ENCODE measurements at regions of chr9 and their contacts with region 1.

Region 1: DNA sequence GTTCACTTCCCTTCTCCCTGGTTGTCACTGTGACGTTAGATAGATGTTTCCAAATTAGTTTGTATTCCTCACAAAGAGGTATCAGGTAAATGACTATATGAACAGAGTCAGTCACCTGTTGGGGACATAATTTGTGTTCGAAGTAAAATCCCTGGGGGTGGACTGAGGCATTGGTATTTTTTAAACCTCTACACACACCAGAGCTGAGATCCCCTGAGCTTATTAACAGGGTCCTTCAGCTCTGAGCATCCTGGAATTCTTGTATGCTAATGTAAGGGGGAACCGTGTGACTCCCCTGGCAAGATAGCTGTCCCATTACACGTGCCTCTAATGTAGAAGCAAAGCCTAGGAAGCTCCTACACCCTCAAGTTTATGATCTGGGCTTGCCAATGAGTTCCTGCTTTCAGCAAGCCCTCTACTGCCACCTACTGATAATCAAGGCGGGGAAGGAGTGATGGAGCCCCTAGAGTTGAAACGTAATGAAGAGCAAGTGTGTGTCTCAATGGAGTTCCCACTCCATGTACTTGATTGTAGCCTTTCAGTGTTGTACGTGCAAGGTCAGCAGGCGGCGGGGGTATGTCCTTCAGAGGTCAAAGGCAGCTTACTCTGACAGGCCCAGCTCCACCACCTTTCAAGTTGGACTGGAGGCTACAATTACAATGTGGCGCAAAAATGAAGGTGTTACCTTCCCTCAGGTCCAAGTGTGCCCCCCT is 14.4 kb downstream of the PRKACG start:
- DNase-seq: peak; percentile 74
- H3K4me3 ChIP-seq: no peak overlapping the region
- H3K27ac ChIP-seq: no peak overlapping the region
- H3K4me1 ChIP-seq: peaks cover 0 to 45% (median 13%) of the 10 kb centered on the region in 6 donors
- H3K27me3 ChIP-seq: no peaks in the 10 kb centered on the region
- CTCF ChIP-seq: peak; percentile 64 to 86 (median 77)
- POLR2A ChIP-seq: no peak

Region 2: DNA sequence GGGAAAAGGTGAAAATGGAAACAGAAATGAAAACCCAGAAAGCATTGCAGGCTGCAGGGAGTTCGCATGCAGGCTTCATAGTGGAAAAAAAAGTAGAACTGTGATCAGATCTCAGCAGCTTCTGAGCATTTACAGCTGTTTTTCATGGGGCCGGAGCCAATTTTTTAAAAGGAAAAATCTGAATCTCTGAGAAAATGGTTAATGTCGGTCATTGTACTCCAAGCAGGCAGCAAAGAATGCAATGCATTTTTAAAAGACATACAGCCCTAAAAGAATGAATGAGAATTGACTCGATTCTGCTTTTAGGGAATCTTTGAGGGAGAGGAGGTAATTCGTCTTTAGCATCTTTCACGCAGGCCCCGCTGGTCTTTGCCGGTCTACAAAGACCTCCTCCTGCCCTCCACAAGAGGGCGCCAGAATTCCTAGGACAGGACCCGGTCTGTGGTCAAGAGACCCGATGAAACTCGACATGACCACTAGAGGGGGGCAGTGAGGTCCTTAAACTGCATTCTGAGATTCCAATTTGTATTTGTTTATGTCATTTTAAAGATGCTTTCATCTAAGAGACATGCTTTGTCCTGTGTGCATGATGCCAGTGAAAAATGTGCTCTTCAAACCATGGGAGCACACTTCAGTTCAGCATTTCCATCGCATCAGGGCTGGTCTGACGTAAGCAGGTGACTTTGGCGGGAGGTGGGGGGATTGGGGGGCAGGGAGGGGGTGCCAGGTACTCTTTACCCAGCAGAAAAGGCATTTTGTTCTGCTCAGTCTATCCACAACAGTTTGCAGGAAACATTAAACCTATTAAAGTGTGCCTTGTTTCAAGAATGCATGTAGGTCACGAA is 415.1 kb before region 1 on chr9:
- intact Hi-C with region 1: loop called (anchors 10 kb)
- DNase-seq: peak; percentile 95
- H3K4me3 ChIP-seq: no peak overlapping the region
- H3K27ac ChIP-seq: no peak overlapping the region
- H3K4me1 ChIP-seq: peaks cover 0 to 10% (median 4%) of the 10 kb centered on the region in 6 donors
- H3K27me3 ChIP-seq: no peaks in the 10 kb centered on the region
- CTCF ChIP-seq: peak; percentile 93 to 99 (median 98)
- POLR2A ChIP-seq: no peak

Region 3: DNA sequence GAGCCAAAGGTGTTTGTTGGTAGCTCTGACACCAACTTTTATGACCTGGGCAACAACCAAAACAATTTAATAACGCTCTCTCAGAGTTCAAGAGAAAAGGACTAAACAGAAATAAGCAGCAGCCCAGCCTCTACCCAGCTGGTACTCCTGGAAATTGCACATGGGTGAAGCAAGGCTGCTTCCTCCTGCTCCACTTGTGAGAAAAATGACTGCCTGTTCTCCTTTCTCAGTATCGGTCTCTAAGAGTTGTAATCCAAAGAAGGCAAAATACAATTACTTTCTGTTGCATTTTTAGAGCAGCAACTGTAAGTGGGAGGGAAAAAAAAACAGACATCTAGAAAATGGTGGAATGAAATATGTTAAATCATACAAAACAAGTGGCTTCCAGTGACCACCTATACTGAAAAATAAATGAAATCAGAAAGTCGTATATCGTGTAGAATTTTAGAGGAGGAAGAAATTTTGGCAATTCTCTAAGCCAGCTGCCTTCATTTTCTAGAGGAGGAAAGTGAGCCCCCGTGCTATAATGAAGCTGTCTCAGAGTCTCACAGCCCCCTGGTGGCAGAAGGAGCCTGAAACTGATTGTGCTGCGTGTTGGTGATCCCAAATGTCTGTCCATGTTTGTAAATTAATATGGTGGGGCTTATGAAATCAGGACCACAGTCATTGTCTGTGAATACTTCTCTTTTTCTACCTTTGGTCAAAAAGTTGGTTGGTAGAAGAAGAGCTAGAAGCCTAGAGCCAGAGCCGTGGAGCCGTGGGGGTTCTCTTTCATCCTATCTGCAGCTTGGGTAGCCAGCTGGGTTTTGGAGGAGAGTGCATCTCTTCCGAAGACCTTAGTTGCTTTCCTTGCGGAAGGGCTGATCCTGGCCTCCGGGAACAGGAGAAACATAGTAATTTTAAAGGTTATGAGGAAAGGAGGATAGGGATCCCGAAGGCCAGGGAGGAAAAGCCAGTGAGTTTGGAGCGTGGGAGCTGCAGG is 154.6 kb before region 1 on chr9:
- intact Hi-C with region 1: loop called (anchors 10 kb)
- DNase-seq: no peak
- H3K4me3 ChIP-seq: peak overlapping the region in 2 of 8 donors; percentile 7 to 43
- H3K27ac ChIP-seq: peak overlapping the region in 7 of 8 donors; percentile 49 to 82 (median 64)
- H3K4me1 ChIP-seq: peaks cover 0 to 25% (median 4%) of the 10 kb centered on the region in 6 donors
- H3K27me3 ChIP-seq: no peaks in the 10 kb centered on the region
- CTCF ChIP-seq: peak; percentile 19 to 70 (median 59)
- POLR2A ChIP-seq: no peak

Region 4: DNA sequence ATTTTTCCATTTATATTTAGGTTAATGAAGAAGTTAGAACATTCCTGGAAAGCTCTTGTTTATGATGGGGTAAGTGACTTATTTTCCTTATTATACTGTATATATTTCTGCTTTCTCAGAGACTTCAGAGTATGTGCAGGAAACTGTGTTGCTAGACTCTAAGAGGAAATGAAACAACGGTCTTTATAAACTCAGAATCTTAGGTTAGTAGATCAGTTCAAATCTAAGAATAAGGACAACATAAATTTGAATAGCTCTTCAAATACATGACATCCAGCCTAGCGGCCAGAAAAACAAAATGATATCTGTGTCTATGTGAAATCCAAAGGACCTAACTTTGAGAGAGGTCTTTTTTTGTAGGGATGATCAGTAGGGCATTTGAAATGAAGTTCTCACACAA is 79.9 kb before region 1 on chr9:
- intact Hi-C with region 1: no loop called
- DNase-seq: no peak
- H3K4me3 ChIP-seq: no peak overlapping the region
- H3K27ac ChIP-seq: peak overlapping the region in 3 of 8 donors; percentile 40 to 63 (median 55)
- H3K4me1 ChIP-seq: peaks cover 0 to 18% (median 7%) of the 10 kb centered on the region in 6 donors
- H3K27me3 ChIP-seq: no peaks in the 10 kb centered on the region
- CTCF ChIP-seq: no peak
- POLR2A ChIP-seq: no peak

Region 5: GRCh38 chr9:69637817-69638200 is 638.3 kb after region 1 on chr9:
- intact Hi-C with region 1: no loop called
- DNase-seq: no peak
- H3K4me3 ChIP-seq: no peak overlapping the region
- H3K27ac ChIP-seq: no peak overlapping the region
- H3K4me1 ChIP-seq: no peaks in the 10 kb centered on the region
- H3K27me3 ChIP-seq: no peaks in the 10 kb centered on the region
- CTCF ChIP-seq: no peak
- POLR2A ChIP-seq: no peak

Measured in spleen (tissue), 13 donors.